Dendritic cell treated with granulocyte-macrophage colony-stimulating factor and Interleukin-4, amounts not matched to agents 40 ng/mL and 50 ng/mL, for 4 days (primary cell): ENCODE measurements at regions of chr19 and their contacts with region 1.

Region 1: DNA sequence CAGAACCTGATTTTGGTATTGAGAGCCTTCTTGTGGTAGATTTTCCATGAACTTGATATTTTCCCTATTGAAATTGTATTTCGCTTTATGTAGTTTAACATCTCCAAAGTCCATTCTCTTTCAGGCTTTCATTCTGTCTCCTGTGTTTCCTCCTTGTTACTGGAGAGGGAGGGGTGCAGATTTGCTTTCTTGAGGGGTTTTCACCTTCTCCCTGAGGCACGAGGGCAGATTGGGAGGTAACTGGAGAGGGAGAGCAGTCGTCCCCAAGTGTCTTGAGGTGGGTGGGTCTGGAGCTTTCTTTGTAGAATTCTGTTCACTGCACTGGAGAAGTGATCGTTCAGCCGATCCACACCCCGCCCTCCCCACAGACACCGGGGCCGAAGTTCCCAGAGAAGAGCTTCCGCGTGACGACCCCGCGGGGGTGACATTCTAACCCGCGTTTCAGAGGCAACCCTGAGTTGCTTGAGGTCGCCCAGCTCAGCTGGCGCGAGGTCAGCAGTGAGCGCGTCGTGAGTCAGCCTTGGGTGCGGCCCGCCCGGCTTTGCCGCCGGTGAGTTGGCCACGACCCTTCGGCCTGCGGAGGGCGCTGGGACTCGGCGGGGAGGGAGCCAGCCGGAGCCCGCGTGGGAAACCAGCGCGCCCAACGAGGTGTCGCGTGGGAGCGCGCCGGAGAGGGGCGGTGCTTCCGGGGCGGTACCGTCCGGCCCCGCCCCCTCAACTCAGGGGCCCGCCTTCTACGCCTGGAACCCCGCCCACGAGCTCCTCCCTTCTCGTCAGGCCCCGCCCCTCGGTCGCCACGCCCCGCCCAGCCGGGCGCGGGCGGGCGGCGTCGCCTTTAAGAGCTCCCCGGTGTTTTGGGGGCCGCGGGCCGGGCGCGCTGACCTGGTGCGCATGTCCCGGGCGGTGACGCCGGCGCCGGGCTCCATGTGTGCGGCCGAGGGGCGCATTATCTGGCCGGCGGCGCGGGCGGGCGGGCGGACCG is at the start of gene GATAD2A:
- H3K4me3 Mint-ChIP-seq: peak within 1 kb of the TSS; percentile 95
- H3K27ac Mint-ChIP-seq: peak within 1 kb of the TSS; percentile 98
- H3K4me1 Mint-ChIP-seq: peaks cover 71% of the 10 kb centered on the region
- H3K27me3 Mint-ChIP-seq: no peaks in the 10 kb centered on the region

Region 2: GRCh38 chr19:19096641-19097627 is 308.2 kb before region 1 on chr19:
- intact Hi-C with region 1: no loop called
- H3K4me3 Mint-ChIP-seq: no peak overlapping the region
- H3K27ac Mint-ChIP-seq: no peak overlapping the region
- H3K4me1 Mint-ChIP-seq: no peaks in the 10 kb centered on the region
- H3K27me3 Mint-ChIP-seq: no peaks in the 10 kb centered on the region

Region 3: GRCh38 chr19:19366612-19367396 is 38.4 kb before region 1 on chr19:
- intact Hi-C with region 1: loop called (anchors 2 kb)
- H3K4me3 Mint-ChIP-seq: no peak overlapping the region
- H3K27ac Mint-ChIP-seq: peak overlapping the region; percentile 72
- H3K4me1 Mint-ChIP-seq: peaks cover 23% of the 10 kb centered on the region
- H3K27me3 Mint-ChIP-seq: no peaks in the 10 kb centered on the region

Region 4: DNA sequence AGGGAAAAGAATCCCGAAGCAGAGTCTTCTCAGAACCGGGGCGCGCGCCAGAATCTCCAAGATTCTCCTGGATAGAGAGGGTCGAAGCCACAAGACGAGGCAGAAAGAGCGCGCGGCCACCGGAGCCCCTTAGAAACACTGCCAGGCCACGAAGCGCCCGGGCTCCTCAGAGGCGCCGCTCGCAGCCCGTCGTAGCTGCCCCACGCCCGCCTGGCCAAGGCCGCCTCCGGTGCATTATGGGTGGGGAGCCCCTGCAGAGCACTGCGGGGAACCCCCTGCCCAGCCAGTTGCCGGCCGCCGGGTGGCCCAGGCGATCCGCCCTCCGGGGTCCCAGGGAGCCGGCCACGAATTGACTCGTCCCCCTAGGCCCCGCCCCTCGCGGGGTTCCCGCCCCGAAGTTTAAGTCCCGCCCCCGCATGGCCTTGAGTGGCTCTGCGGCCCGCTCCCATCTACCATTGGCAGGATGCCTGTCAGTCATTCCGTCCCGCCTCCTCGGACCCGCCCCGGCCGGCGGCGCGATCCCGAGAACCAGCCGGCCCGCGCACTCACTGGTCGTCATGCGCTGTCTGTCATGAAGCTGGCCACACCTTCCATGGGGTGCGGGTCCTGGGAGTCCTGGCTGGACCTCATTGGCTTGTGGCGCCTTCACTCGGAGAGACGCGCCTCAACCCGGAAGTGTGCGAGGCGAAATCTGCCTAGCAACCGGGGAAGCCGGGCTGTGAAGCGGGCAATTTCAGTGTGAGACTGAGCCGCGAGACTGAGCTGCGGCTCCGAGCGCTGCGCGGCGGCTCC is 19.9 kb before region 1 on chr19:
- intact Hi-C with region 1: loop called (anchors 1 kb)
- H3K4me3 Mint-ChIP-seq: peak overlapping the region; percentile 98
- H3K27ac Mint-ChIP-seq: peak overlapping the region; percentile 98
- H3K4me1 Mint-ChIP-seq: peaks cover 73% of the 10 kb centered on the region
- H3K27me3 Mint-ChIP-seq: no peaks in the 10 kb centered on the region

Region 5: DNA sequence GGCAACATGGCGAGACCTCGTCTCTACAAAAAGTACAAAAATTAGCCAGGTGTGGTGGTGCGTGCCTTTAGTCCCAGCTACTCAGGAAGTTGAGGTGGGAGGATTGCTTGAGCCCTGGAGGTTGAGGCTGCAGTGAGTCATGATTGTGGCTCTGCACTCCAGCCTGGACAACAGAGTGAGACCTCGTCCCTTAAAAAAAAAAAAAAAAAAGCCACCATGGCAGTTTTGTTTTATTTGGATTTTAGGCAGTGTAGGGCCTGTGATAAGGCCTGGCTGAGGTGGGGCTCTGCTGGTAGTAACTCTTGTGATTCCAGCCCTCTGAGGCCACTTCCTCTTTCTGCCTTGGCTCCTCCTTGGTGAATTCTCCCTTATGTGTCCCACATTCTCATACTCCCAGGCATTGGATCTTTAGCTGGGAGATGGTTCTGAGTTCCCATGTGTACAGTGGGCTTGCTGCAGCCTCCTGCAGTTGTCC is 39.5 kb after region 1 on chr19:
- intact Hi-C with region 1: loop called (anchors 5 kb)
- H3K4me3 Mint-ChIP-seq: no peak overlapping the region
- H3K27ac Mint-ChIP-seq: peak overlapping the region; percentile 80
- H3K4me1 Mint-ChIP-seq: peaks cover 85% of the 10 kb centered on the region
- H3K27me3 Mint-ChIP-seq: no peaks in the 10 kb centered on the region

Region 6: DNA sequence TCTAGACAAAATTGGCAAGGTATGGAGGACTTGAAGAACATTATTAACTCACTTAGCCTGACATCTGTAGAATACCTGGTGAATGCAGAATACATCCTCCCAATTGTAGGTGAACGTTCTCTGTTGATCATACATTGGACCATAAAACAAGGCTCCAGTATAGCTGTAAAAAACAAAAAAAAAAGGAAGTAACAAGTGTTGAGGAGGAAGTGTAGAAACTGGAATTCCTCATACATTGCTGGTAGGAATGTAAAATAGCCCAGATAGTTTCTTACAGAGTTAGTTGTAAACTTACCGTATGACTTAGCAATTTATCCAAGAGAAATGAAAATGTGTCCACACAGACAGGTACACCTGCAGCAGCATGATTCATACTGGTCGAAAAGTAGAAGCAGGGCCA is 65.4 kb after region 1 on chr19:
- intact Hi-C with region 1: loop called (anchors 5 kb)
- H3K4me3 Mint-ChIP-seq: no peak overlapping the region
- H3K27ac Mint-ChIP-seq: peak overlapping the region; percentile 56
- H3K4me1 Mint-ChIP-seq: peaks cover 54% of the 10 kb centered on the region
- H3K27me3 Mint-ChIP-seq: no peaks in the 10 kb centered on the region